Mammary epithelial cell (primary cell): ENCODE measurements at regions of chr3 and their contacts with region 1.

Region 1: DNA sequence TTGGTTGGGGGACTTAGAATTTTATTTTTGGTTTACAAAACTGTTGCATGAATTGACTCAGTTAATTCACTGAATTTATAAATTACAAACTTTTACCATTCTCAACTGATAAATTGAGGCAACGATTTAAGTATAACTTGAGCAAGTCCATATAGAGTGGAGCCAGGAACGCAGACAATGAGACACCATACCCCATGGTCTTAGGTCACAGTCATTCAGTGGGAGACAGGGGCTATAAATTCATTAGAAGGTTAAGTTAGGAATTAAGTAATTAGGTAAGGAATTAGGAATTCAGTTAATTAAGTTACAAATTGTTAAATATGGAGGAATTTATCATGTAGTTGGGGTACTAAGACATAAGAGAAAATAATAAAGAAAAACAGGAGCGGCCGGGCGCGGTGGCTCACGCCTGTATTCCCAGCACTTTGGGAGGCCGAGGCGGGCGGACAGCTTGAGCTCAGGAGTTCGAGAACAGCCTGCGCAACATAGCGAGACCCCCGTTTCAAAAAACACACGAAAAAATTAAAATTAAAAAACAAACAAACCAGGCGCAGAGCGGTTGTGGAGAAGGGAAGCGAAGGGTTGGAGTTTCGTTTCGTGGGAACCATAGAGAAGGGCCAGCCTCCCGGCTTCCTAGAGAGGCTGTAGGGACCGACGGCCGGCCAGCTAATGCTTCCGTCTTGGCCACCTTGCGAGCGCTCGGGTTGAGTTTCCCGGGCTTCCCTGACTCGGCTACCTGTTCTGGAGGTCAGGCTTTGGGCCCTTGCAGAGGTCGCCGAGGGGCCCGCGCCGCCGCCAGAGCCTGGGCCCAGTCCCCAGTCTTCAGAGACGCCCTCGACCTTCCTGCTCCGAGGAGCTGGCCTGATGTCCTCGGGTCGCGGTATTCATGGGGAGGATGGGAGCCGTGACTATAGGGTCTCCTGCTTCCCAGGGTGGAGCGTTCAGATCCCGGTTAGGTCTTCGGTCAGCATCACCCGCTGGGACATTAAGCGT is at the start of gene ZNF619:
- DNase-seq: peak; percentile 71
- H3K4me3 ChIP-seq: peak within 1 kb of the TSS; percentile 57 to 88 (median 80)
- H3K27ac ChIP-seq: peak within 1 kb of the TSS; percentile 67
- H3K4me1 ChIP-seq: peaks cover 5% of the 10 kb centered on the region
- H3K27me3 ChIP-seq: no peaks in the 10 kb centered on the region
- CTCF ChIP-seq: no peak
- total RNA-seq, gene ZNF619: 6.5 to 7.8 TPM

Region 2: GRCh38 chr3:40504636-40505430 is 28.1 kb after region 1 on chr3:
- CTCF ChIA-PET with region 1: no interaction called
- dilution Hi-C with region 1: no loop called
- in situ Hi-C with region 1: no loop called
- intact Hi-C with region 1: loop called (anchors 1 kb)
- DNase-seq: peak; percentile 97
- H3K4me3 ChIP-seq: no peak overlapping the region
- H3K27ac ChIP-seq: no peak overlapping the region
- H3K4me1 ChIP-seq: peaks cover 17% of the 10 kb centered on the region
- H3K27me3 ChIP-seq: no peaks in the 10 kb centered on the region
- CTCF ChIP-seq: no peak

Region 3: GRCh38 chr3:40524568-40525285 is 48.0 kb after region 1 on chr3 and contains the start of gene ZNF621:
- CTCF ChIA-PET with region 1: no interaction called
- dilution Hi-C with region 1: no loop called
- in situ Hi-C with region 1: no loop called
- intact Hi-C with region 1: loop called (anchors 1 kb)
- DNase-seq: peak; percentile 84
- H3K4me3 ChIP-seq: peak within 1 kb of the TSS; percentile 76 to 84 (median 78)
- H3K27ac ChIP-seq: peak within 1 kb of the TSS; percentile 84
- H3K4me1 ChIP-seq: peaks cover 13% of the 10 kb centered on the region
- H3K27me3 ChIP-seq: no peaks in the 10 kb centered on the region
- CTCF ChIP-seq: no peak
- total RNA-seq, gene ZNF621: 20.0 to 32.4 TPM

Region 4: DNA sequence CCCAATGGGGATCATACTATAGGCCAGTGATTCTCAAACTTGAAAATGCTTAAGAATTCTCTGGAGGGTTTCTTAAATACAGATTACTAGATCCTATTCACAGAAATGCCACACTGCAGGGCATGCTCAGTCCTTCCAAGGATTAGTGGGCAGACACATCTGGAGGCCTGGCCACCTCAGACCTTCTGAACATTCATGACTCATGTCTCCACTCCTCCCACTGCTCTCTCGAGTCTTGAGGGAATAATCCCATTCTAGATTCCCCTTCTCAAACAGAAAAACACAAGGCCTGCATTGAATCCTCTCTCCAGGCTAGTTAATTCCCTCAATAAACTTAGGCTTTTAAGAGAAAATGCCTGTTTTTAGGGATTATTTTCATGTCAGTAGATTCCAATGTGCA is 70.0 kb after region 1 on chr3:
- CTCF ChIA-PET with region 1: no interaction called
- dilution Hi-C with region 1: loop called (anchors 5 kb)
- in situ Hi-C with region 1: no loop called
- intact Hi-C with region 1: no loop called
- DNase-seq: peak; percentile 60
- H3K4me3 ChIP-seq: no peak overlapping the region
- H3K27ac ChIP-seq: no peak overlapping the region
- H3K4me1 ChIP-seq: no peaks in the 10 kb centered on the region
- H3K27me3 ChIP-seq: no peaks in the 10 kb centered on the region
- CTCF ChIP-seq: no peak